Aorta (tissue), 5 donors: ENCODE measurements at regions of chr13 and their contacts with region 1.

Region 1: GRCh38 chr13:37058910-37059847 is at the start of gene SUPT20H:
- DNase-seq: peak; percentile 95 to 98
- ATAC-seq: peak; percentile 99
- H3K4me3 ChIP-seq: peak within 1 kb of the TSS; percentile 64 to 89
- H3K27ac ChIP-seq: peak within 1 kb of the TSS in 1 of 2 donors; percentile 52
- H3K4me1 ChIP-seq: peaks cover 0 to 3% of the 10 kb centered on the region in 2 donors
- H3K27me3 ChIP-seq: no peaks in the 10 kb centered on the region
- total RNA-seq, gene SUPT20H: 48.4 to 65.1 TPM

Region 2: DNA sequence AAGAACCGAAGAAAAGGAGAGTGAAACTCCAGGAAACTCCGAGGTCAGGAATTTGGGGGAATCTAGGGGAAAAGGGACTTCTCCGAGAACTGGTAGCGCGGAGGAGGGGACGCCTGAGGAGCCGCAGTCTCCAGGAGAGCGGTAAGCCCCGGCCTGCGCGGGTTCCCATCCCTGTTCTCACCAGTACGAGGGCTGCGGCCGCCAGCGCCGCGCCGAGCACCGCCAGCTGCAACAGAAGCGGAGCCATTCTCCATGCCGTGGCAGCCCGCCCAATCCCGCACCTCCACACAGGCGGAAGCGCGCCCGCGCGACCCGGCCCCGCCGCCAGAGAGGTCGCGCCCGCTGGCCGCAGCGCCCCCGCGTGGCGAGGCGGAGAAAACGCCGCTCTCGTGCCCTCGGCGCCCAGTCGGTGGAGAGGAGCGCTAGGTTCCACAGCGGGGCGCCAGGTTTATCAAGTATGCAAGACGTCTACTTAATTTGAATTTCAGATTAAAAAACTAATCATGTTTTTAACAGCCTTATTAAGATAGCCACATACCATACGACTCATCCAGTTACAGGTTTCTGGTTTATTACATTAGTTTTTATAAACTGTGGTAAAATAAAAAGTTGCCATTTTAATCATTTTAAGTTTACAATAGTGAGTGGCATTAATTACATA is 60.0 kb before region 1 on chr13 and contains the start of gene ALG5:
- intact Hi-C with region 1: loop called in 1 of 2 experiments (anchors 1 kb)
- DNase-seq: peak; percentile 93 to 97
- ATAC-seq: peak; percentile 96
- H3K4me3 ChIP-seq: peak within 1 kb of the TSS; percentile 65 to 84
- H3K27ac ChIP-seq: peak within 1 kb of the TSS; percentile 77 to 88
- H3K4me1 ChIP-seq: peaks cover 0 to 4% of the 10 kb centered on the region in 2 donors
- H3K27me3 ChIP-seq: no peaks in the 10 kb centered on the region
- total RNA-seq, gene ALG5: 23.4 to 27.6 TPM

Region 3: DNA sequence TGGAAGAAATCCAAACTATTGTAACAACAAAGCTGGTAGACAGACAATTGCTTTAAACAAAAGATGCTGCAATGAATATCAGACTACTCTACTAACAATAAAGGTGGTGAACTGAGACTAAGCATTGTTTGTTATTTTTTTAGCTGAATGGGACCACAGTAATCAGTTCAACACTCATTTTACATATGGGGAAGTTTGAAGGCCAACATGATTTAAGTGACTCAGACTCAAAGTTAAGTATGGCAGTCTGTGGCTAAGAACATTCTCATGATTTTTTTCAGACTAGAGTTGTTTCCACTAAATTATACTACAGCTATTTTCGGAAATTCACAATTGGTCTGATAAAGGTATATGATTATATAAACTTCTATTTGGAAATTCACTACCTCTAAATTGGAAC is 48.2 kb before region 1 on chr13:
- intact Hi-C with region 1: no loop called
- DNase-seq: no peak
- ATAC-seq: no peak
- H3K4me3 ChIP-seq: no peak overlapping the region
- H3K27ac ChIP-seq: no peak overlapping the region
- H3K4me1 ChIP-seq: no peaks in the 10 kb centered on the region
- H3K27me3 ChIP-seq: no peaks in the 10 kb centered on the region

Region 4: DNA sequence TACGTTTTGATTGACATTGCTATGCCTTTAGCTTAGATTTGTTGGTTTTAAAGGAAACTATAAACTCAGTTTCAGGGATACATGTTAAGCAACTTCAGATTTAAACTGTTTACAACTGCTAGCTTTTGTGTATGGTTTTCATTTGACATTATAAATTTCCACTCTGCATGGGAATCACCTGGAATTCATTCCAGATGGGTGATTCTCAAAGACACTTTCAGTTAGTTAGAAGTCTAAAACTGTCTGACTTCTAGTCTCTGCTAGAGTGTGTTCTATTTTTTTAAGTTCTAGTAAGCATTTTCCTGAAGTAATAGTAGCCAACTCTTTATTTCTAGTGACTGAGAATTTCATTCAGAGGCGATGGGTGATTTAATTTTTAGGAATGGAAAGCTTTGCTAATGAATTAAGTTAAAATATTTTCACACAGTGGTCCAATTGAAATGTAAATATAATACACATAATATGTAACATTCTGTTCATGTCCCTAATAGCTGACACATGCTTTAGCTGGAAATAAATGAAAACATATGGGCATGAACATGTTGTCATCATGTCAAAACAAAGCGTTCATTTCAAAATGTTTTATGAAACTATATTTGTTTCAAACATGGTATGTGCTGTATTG is 104.6 kb after region 1 on chr13:
- intact Hi-C with region 1: no loop called
- DNase-seq: no peak
- ATAC-seq: no peak
- H3K4me3 ChIP-seq: no peak overlapping the region
- H3K27ac ChIP-seq: no peak overlapping the region
- H3K4me1 ChIP-seq: no peaks in the 10 kb centered on the region
- H3K27me3 ChIP-seq: no peaks in the 10 kb centered on the region

Region 5: GRCh38 chr13:38053901-38054300 is 994.7 kb after region 1 on chr13:
- intact Hi-C with region 1: no loop called
- DNase-seq: no peak
- ATAC-seq: no peak
- H3K4me3 ChIP-seq: no peak overlapping the region
- H3K27ac ChIP-seq: no peak overlapping the region
- H3K4me1 ChIP-seq: no peaks in the 10 kb centered on the region
- H3K27me3 ChIP-seq: no peaks in the 10 kb centered on the region